Activated T-helper 1 cell treated with anti-CD3 and anti-CD28 coated beads, Interleukin-12 subunit alpha, Interleukin-12 subunit beta, Interleukin-2, Interleukin-4 antibody, amounts not matched to agents 30 ng/mL and 10 ng/mL and 1 ng/mL, durations not matched to agents 14 hours and 24 hours and 36 hours (primary cell): ENCODE measurements at regions of chr7 and their contacts with region 1.

Region 1: GRCh38 chr7:135281363-135281949 is 47.8 kb downstream of the STRA8 start:
- DNase-seq: peak; percentile 65
- H3K4me3 Mint-ChIP-seq: no peak overlapping the region
- H3K27ac Mint-ChIP-seq: no peak overlapping the region
- H3K4me1 Mint-ChIP-seq: peaks cover 16% of the 10 kb centered on the region
- H3K27me3 Mint-ChIP-seq: peaks cover 10% of the 10 kb centered on the region

Region 2: GRCh38 chr7:135300913-135301765 is 19.7 kb after region 1 on chr7:
- intact Hi-C with region 1: no loop called
- DNase-seq: no peak
- H3K4me3 Mint-ChIP-seq: no peak overlapping the region
- H3K27ac Mint-ChIP-seq: no peak overlapping the region
- H3K4me1 Mint-ChIP-seq: no peaks in the 10 kb centered on the region
- H3K27me3 Mint-ChIP-seq: peaks cover 8% of the 10 kb centered on the region

Region 3: DNA sequence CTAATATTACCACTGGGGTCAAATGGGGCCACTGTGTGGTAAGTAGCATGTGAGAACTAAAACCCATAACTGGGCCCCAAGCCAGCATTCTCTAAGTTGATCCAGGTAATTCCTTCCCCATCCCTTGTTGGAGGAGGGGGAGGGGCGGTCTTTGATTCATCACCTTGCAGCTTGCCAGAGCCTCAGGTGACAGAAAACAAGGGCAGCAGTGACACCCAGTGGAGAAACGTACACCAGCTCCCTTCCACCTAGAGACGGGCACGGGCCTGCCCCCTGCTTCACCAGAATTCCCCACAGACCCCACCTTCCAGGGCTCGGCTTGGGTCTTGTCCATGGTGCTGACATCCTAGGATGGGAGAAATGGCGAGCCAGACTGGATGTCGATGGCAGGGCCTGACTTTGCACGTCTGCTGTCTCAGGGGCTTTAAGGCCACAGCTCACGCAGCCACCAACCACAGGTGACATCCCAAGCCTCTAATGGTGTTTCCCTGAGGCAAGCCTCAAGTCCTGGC is 54.2 kb after region 1 on chr7:
- intact Hi-C with region 1: loop called (anchors 1 kb)
- DNase-seq: peak; percentile 1
- H3K4me3 Mint-ChIP-seq: no peak overlapping the region
- H3K27ac Mint-ChIP-seq: no peak overlapping the region
- H3K4me1 Mint-ChIP-seq: no peaks in the 10 kb centered on the region
- H3K27me3 Mint-ChIP-seq: peaks cover 2% of the 10 kb centered on the region

Region 4: DNA sequence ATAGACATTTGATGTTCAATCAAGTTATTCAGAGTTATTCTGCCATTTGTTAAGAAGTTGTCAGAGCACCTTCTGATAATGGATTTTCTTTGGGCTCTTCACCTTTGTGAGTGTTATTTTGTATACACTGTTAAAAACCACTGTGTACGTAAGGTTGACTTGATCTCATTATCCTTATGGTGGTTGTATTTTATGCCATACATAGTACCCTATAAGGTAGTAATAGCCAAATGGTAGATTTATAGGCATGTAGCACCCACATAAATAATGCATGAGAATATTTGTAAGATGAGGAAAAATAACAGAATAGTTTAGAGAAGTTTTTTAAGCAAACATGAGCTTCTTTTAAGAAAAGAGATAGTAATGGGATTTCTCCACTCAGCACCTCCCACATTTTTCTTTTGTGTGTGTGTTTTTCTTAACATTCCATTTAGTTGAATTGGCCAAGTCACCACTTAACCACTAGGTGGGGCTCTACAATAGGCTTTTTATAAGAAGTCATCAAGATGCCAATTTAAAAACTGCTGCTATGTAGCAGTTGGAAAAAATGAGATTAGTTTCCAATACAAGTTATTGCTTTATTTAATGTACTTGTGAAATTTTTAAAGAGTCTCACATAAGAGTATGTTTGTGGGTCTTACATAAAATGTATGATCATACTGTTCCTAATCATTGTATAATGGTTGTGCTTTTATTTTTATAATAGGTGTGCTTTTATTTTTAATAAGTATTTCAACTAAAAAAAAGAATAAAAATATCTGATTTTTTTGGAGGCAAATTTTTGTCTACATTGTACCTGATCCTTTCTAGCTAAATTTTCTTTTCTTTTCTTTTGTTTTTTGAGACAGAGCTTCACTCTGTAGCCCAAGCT is 339.8 kb after region 1 on chr7:
- intact Hi-C with region 1: loop called (anchors 2 kb)
- DNase-seq: no peak
- H3K4me3 Mint-ChIP-seq: no peak overlapping the region
- H3K27ac Mint-ChIP-seq: no peak overlapping the region
- H3K4me1 Mint-ChIP-seq: peaks cover 2% of the 10 kb centered on the region
- H3K27me3 Mint-ChIP-seq: no peaks in the 10 kb centered on the region